Cardiac septum (tissue), 1 donor: ENCODE measurements at regions of chr17 and their contacts with region 1.

Region 1: GRCh38 chr17:10316801-10317542 is 55.8 kb downstream of the MYH13 start:
- DNase-seq: no peak

Region 2: GRCh38 chr17:10251212-10251948 is 65.6 kb before region 1 on chr17:
- intact Hi-C with region 1: loop called (anchors 10 kb)
- DNase-seq: no peak